Activated CD4-positive, alpha-beta memory T cell treated with anti-CD3 and anti-CD28 coated beads, Interleukin-2, amount 10 ng/mL, durations not matched to agents 7 days and 5 days (primary cell): ENCODE measurements at regions of chr22 and their contacts with region 1.

Region 1: GRCh38 chr22:41940832-41941765 is 5.9 kb downstream of the CENPM start:
- DNase-seq: peak; percentile 91
- H3K4me3 Mint-ChIP-seq: peak overlapping the region; percentile 76
- H3K27ac Mint-ChIP-seq: peak overlapping the region; percentile 99
- H3K4me1 Mint-ChIP-seq: peaks cover 67% of the 10 kb centered on the region
- H3K27me3 Mint-ChIP-seq: no peaks in the 10 kb centered on the region

Region 2: DNA sequence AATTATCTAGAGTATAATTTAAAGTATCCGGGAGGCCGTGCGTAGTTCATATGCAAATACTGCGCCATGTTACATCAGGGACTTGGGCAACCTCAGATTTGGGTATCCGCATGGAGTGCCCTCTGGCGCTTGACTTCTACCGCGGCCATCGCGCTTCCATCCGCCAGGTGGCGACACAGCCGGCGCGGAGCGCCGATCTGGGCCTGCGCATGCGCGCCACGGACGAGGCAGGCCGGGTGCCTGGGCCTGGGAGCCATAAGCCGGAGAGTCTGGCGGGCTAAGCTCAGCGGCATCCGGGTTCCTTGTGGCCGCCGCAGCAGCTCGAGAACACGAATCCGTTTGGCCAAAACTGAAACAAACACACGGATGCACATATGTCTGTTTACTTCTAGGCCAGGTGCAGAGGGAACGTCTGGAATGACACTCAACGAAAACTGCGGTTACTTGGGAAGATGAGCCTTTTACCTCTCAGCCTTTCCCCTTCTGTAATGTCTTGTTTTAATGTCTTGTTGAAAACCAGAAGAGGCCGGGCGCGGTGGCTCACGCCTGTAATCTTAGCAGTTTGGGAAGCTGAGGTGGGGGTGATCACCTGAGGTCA is 274.3 kb before region 1 on chr22:
- CTCF ChIA-PET with region 1: interaction called, 25 read pairs
- POLR2A ChIA-PET with region 1: interaction called, 14 read pairs
- DNase-seq: peak; percentile 96
- H3K4me3 Mint-ChIP-seq: peak overlapping the region; percentile 86
- H3K27ac Mint-ChIP-seq: peak overlapping the region; percentile 98
- H3K4me1 Mint-ChIP-seq: peaks cover 21% of the 10 kb centered on the region
- H3K27me3 Mint-ChIP-seq: no peaks in the 10 kb centered on the region

Region 3: DNA sequence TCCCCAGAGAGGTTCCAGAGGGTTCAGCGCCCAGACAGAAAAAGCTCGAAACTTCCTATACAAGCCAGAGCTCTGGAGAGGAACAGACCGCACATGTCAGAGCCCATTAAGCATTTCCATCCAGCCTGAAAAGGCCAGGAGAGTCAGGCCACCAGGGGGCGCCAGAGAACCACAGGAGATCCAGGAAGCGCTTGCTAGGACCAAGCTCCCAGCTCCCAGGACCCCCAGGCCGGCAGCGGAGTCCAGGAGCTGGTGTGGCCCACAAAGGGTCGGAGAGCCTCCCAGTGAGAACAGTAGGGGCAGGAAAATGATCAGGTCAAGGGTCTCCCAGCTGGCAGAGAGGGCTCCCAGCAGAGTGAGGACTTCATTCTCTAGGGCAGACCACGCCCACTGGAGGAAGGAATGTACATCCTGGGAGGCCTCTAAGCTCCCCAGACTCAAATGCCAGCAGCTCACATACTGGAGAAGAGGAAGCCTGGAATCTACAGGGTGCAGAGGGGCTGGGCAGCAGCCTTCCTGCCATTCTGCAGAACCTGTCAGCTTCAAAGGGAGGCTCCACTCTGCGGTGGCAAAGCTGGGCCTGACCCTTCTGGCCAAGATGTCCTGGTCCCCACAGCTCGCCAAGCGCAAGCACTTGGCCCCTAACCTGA is 243.8 kb before region 1 on chr22:
- CTCF ChIA-PET with region 1: interaction called, 64 read pairs
- POLR2A ChIA-PET with region 1: interaction called, 36 read pairs
- DNase-seq: peak; percentile 91
- H3K4me3 Mint-ChIP-seq: no peak overlapping the region
- H3K27ac Mint-ChIP-seq: peak overlapping the region; percentile 68
- H3K4me1 Mint-ChIP-seq: peaks cover 18% of the 10 kb centered on the region
- H3K27me3 Mint-ChIP-seq: peaks cover 4% of the 10 kb centered on the region

Region 4: DNA sequence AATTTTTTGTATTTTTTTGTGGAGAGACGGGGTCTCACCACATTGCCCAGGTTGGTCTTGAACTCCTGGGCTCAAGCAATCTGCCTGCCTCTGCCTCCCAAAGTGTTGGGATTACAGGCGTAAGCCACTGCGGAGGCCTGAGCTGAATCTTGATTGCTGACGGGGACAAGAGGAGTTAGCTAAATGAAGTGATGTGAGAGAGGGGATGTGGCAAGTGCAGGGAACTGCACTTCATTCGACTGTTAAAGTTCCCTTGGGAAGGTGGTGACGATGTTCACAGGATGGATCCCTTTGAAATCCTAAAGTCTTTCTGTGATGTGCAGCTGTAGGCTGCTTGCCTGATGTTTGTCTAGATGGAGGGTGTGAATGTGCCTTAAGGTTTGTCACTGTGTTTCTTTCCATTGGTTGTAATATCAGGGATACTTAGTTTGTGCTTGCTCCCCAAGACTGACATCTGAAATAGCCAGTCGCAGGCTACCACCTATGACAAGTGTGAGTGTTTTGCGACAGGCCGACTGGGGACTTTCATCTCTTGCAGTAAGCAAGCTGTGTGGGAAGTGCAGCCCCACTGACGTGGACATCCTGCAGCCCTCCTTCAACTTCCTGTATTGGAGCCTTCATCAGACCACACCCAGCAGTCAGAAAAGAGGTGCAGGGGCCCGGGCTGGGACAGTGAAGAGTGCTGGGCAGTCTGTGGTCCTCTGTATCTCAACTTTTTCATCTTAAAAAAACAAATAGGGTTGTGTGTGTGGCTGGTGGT is 160.2 kb before region 1 on chr22:
- CTCF ChIA-PET with region 1: interaction called, 8 read pairs
- POLR2A ChIA-PET with region 1: interaction called, 33 read pairs
- DNase-seq: peak; percentile 96
- H3K4me3 Mint-ChIP-seq: peak overlapping the region; percentile 85
- H3K27ac Mint-ChIP-seq: peak overlapping the region; percentile 97
- H3K4me1 Mint-ChIP-seq: peaks cover 46% of the 10 kb centered on the region
- H3K27me3 Mint-ChIP-seq: no peaks in the 10 kb centered on the region

Region 5: DNA sequence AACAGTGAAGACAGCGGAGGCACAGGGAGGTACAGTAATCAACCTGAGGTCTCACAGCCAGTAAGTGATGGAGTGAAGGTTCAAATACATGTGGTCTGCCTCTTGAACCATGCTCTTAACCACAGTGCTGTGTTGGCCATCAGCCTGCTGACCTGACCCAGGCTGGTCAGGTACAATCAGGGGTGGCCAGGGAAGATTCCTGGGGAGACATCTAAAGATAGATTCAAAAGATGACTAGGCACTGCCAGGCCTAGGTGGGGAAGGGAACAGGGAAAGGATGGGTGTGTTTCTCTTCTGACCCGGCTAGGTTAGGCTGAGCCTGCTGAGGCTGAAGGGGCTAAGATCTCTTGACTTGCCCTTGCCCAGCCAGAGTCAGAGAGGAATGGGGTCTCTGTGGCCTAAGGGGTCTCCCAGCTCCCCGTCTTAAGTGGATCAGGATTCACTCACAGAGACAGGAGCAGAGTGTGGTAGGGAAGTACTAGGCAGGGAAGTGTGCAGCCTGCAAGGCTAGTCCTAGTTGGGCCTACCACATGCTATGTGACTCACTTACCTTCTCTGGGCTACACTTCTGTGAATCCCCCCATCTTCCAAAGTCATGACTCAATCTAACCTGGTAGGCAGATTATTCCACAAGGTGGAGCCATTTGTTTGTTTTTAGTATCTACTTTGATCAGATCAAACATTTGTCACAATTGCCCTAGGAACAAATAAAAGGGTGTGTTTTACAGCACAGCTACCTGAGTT is 118.6 kb before region 1 on chr22:
- CTCF ChIA-PET with region 1: interaction called, 23 read pairs
- POLR2A ChIA-PET with region 1: interaction called, 14 read pairs
- DNase-seq: no peak
- H3K4me3 Mint-ChIP-seq: no peak overlapping the region
- H3K27ac Mint-ChIP-seq: peak overlapping the region; percentile 58
- H3K4me1 Mint-ChIP-seq: peaks cover 22% of the 10 kb centered on the region
- H3K27me3 Mint-ChIP-seq: no peaks in the 10 kb centered on the region

Region 6: GRCh38 chr22:41857155-41857859 is 83.8 kb before region 1 on chr22:
- CTCF ChIA-PET with region 1: interaction called, 13 read pairs
- POLR2A ChIA-PET with region 1: interaction called, 14 read pairs
- DNase-seq: peak; percentile 77
- H3K4me3 Mint-ChIP-seq: no peak overlapping the region
- H3K27ac Mint-ChIP-seq: peak overlapping the region; percentile 86
- H3K4me1 Mint-ChIP-seq: peaks cover 72% of the 10 kb centered on the region
- H3K27me3 Mint-ChIP-seq: no peaks in the 10 kb centered on the region

Region 7: GRCh38 chr22:41925655-41926460 is 15.2 kb before region 1 on chr22:
- CTCF ChIA-PET with region 1: interaction called, 31 read pairs
- POLR2A ChIA-PET with region 1: interaction called, 32 read pairs
- DNase-seq: peak; percentile 77
- H3K4me3 Mint-ChIP-seq: peak overlapping the region; percentile 60
- H3K27ac Mint-ChIP-seq: no peak overlapping the region
- H3K4me1 Mint-ChIP-seq: peaks cover 7% of the 10 kb centered on the region
- H3K27me3 Mint-ChIP-seq: peaks cover 26% of the 10 kb centered on the region

Region 8: DNA sequence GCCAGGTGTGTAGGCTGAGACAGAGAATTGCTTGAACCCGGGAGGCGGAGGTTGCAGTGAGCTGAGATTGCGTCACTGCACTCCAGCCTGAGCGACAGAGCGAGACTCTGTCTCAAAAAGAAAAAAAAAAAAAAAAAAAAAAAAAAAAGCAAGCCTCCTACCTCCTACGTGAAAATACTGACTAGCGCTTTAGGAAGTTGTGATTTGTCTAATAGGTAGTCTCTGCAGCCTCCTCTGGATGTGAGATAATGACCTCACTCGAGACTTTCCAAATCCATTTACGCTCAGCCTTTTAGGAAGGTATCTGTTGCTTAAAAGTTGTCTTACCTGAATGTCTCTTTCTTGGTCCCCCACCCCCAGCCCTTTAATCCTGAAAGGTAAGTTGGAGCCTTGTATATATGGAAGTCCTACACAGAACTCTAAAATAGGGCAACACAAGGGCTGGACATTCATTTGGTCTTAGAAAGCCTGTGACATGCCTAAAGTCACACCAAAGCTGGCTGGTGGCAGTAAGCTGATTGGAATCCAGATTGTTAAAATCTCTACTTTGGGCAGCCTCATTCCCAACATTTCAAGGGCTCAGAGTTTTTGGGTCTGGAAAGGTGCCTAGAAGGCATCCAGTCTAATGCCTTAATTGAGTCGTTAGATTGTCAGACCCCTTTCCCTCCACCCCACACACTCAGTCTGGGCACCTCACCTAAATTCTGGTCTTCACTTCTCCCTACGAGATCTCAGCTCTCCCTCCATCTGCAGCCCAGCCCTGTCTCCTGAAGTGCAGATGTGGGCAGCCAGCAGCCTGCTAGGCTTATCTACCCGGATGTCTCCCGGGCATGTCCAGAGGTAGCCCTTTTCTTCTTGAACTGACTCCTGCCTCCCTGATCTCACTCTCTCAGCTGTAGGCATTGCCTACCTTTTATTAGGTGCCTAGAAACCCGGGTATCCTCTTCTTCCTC is 33.9 kb after region 1 on chr22:
- CTCF ChIA-PET with region 1: no interaction called
- POLR2A ChIA-PET with region 1: no interaction called
- DNase-seq: no peak
- H3K4me3 Mint-ChIP-seq: peak overlapping the region; percentile 60
- H3K27ac Mint-ChIP-seq: no peak overlapping the region
- H3K4me1 Mint-ChIP-seq: peaks cover 23% of the 10 kb centered on the region
- H3K27me3 Mint-ChIP-seq: peaks cover 49% of the 10 kb centered on the region